ENCODE measurements at regions of chrX and their contacts with region 1.

Region 1: DNA sequence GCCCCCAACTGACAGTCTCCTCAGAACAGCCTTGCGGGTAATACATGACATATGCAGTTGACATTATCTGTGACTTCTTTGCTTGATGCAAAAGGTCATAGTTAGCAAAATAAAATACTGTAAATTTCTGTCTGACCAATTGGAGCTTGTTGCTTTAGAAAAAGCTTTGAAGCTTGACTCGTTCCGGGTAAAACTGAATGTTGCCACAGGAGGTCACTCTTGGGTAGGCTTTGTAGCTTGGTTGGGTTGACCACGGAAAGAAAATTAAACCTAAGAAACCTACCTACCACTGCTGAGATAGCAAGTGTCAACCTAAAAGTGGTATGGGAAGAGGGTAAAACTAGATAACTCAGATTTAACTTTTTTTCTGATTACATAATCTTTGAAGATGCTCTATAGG is 23.2 kb downstream of the PRPS2 start:
- DNase-seq: peak; percentile 59
- ATAC-seq: peak; percentile 97
- H3K4me3 ChIP-seq: no peak overlapping the region
- H3K27ac ChIP-seq: no peak overlapping the region
- H3K4me1 ChIP-seq: no peaks in the 10 kb centered on the region
- H3K27me3 ChIP-seq: no peaks in the 10 kb centered on the region
- CTCF ChIP-seq: peak; percentile 66 to 86 (median 69)
- EP300 ChIP-seq: no peak
- POLR2A ChIP-seq: no peak
- RAD21 ChIP-seq: peak; percentile 98

Region 2: GRCh38 chrX:12278151-12278550 is 536.3 kb before region 1 on chrX:
- CTCF ChIA-PET with region 1: no interaction called
- POLR2A ChIA-PET with region 1: no interaction called
- RAD21 ChIA-PET with region 1: no interaction called
- SMC1A ChIA-PET with region 1: no interaction called
- in situ Hi-C with region 1: no loop called
- intact Hi-C with region 1: no loop called
- DNase-seq: no peak
- ATAC-seq: no peak
- H3K4me3 ChIP-seq: no peak overlapping the region
- H3K27ac ChIP-seq: no peak overlapping the region
- H3K4me1 ChIP-seq: no peaks in the 10 kb centered on the region
- H3K27me3 ChIP-seq: no peaks in the 10 kb centered on the region
- CTCF ChIP-seq: no peak
- EP300 ChIP-seq: no peak
- POLR2A ChIP-seq: no peak
- RAD21 ChIP-seq: no peak

Region 3: GRCh38 chrX:12672367-12673106 is 141.9 kb before region 1 on chrX:
- CTCF ChIA-PET with region 1: no interaction called
- POLR2A ChIA-PET with region 1: no interaction called
- RAD21 ChIA-PET with region 1: no interaction called
- SMC1A ChIA-PET with region 1: no interaction called
- in situ Hi-C with region 1: no loop called
- intact Hi-C with region 1: no loop called
- DNase-seq: no peak
- ATAC-seq: no peak
- H3K4me3 ChIP-seq: no peak overlapping the region
- H3K27ac ChIP-seq: no peak overlapping the region
- H3K4me1 ChIP-seq: no peaks in the 10 kb centered on the region
- H3K27me3 ChIP-seq: no peaks in the 10 kb centered on the region; a peak in 1 of 4 replicates
- CTCF ChIP-seq: no peak
- EP300 ChIP-seq: no peak
- POLR2A ChIP-seq: no peak
- RAD21 ChIP-seq: no peak

Region 4: DNA sequence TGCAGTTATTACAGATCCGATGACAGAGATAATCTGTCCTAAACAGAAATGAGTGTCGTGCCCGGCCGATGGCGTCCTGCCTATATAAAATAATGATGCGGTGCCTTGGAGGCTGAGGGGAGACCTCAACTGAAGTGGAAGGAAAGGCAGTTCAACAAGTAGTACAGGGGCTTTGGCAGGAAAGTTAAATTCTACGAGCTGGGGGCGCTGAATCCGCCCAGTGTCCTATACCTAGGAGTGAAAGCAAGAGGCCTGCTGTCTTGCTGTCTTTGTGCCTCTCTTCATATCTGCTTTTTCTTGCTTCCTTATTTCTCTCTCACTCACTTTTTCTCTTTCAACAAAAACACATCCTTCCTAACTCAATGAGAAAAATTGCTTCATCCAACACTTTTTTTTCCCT is 105.4 kb before region 1 on chrX:
- CTCF ChIA-PET with region 1: no interaction called
- POLR2A ChIA-PET with region 1: no interaction called
- RAD21 ChIA-PET with region 1: no interaction called
- SMC1A ChIA-PET with region 1: no interaction called
- in situ Hi-C with region 1: no loop called
- intact Hi-C with region 1: no loop called
- DNase-seq: no peak
- ATAC-seq: no peak
- H3K4me3 ChIP-seq: no peak overlapping the region
- H3K27ac ChIP-seq: no peak overlapping the region
- H3K4me1 ChIP-seq: no peaks in the 10 kb centered on the region
- H3K27me3 ChIP-seq: peaks cover 0 to 1% of the 10 kb centered on the region in 2 experiments; a peak in 2 of 4 replicates
- CTCF ChIP-seq: no peak
- EP300 ChIP-seq: no peak
- POLR2A ChIP-seq: no peak
- RAD21 ChIP-seq: no peak

Region 5: GRCh38 chrX:12771445-12772069 is 42.9 kb before region 1 on chrX:
- CTCF ChIA-PET with region 1: interaction called, 31 read pairs
- POLR2A ChIA-PET with region 1: no interaction called
- RAD21 ChIA-PET with region 1: interaction called, 4 read pairs
- SMC1A ChIA-PET with region 1: interaction called, 5 read pairs
- in situ Hi-C with region 1: no loop called
- intact Hi-C with region 1: no loop called
- DNase-seq: peak; percentile 20
- ATAC-seq: peak; percentile 100
- H3K4me3 ChIP-seq: no peak overlapping the region
- H3K27ac ChIP-seq: no peak overlapping the region
- H3K4me1 ChIP-seq: no peaks in the 10 kb centered on the region
- H3K27me3 ChIP-seq: peaks cover 0 to 8% of the 10 kb centered on the region in 2 experiments; a peak in 2 of 4 replicates
- CTCF ChIP-seq: peak; percentile 94 to 97 (median 94)
- EP300 ChIP-seq: no peak
- POLR2A ChIP-seq: no peak
- RAD21 ChIP-seq: peak; percentile 46; the same call in 1 of the 2 replicates

Region 6: GRCh38 chrX:12825801-12826200 is 11.4 kb after region 1 on chrX:
- CTCF ChIA-PET with region 1: interaction called, 22 read pairs
- POLR2A ChIA-PET with region 1: interaction called, 3 read pairs
- RAD21 ChIA-PET with region 1: interaction called, 3 read pairs
- SMC1A ChIA-PET with region 1: interaction called, 16 read pairs
- in situ Hi-C with region 1: no loop called
- intact Hi-C with region 1: no loop called
- DNase-seq: no peak
- ATAC-seq: no peak
- H3K4me3 ChIP-seq: no peak overlapping the region
- H3K27ac ChIP-seq: no peak overlapping the region
- H3K4me1 ChIP-seq: no peaks in the 10 kb centered on the region
- H3K27me3 ChIP-seq: no peaks in the 10 kb centered on the region
- CTCF ChIP-seq: no peak
- EP300 ChIP-seq: no peak
- POLR2A ChIP-seq: no peak
- RAD21 ChIP-seq: no peak

Region 7: DNA sequence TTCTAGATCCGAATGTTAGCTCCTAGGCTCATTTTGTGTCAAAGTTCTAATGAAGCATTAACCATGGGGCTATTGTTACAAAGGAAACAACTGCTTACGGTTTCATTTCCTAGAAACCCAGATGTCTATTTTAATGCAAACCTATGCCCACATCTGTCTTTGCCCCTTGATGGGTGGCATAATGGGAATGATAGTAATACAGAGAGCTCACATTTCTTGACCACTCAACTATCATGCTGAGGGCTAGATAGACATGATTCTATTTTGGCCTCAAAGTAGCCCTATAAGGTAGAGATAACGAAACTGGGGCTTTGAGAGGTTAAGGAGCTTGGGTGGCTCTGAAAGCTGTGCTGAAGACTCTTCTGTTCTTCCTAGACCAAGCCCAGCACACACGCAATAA is 54.3 kb after region 1 on chrX:
- CTCF ChIA-PET with region 1: interaction called, 22 read pairs
- POLR2A ChIA-PET with region 1: no interaction called
- RAD21 ChIA-PET with region 1: interaction called, 9 read pairs
- SMC1A ChIA-PET with region 1: interaction called, 51 read pairs
- in situ Hi-C with region 1: no loop called
- intact Hi-C with region 1: loop called (anchors 2 kb)
- DNase-seq: peak; percentile 78
- ATAC-seq: peak; percentile 73
- H3K4me3 ChIP-seq: peak overlapping the region; percentile 63
- H3K27ac ChIP-seq: peak overlapping the region; percentile 97
- H3K4me1 ChIP-seq: peaks cover 28% of the 10 kb centered on the region
- H3K27me3 ChIP-seq: no peaks in the 10 kb centered on the region
- CTCF ChIP-seq: no peak
- EP300 ChIP-seq: peak in 1 of 2 experiments; percentile 48; a peak in 1 of 4 replicates
- POLR2A ChIP-seq: no peak; the same call in 1 of the 2 replicates
- RAD21 ChIP-seq: no peak

Region 8: DNA sequence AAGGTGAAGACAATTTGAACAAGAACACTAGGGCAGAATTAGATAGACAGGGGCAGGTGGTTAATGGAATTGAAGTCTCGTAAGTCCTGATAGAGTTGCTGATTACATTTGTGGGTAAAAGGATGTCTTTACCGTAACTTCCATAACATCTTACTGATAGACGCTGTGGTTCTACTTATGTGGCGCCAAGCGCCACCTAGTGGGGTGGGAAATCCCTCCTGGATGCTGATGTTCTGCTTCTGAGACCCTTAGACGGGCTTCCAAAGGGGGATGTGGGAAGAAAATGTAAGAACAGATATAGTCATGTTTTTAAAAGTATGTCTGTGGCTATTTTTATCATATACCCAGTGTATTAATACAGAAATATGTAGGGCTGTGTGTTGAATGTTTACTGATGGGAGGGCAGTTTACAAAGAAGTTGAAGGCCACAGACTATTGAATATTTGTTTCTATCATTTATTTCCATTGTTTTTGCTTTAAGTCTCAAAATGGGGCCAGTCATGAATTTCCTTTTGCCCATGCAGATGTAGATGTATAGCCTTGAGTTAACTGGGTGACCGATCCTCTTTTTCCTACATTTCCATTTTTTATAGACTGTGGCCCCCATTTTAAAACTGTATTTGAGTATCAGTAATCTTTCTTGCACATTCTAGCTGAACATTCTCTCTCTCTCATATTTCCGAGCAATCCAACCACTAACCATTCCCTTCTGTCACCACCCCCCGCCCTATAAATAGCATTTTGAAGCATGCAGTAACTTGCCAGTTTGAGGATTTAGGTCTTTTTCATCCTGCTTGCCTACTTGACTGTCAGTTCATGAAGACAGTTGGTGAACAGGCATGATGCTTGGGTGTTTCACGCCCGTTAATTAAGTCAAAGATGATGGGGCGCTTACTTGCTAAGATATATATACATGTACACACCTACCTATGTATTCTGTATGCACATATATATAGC is 79.9 kb after region 1 on chrX:
- CTCF ChIA-PET with region 1: interaction called, 431 read pairs
- POLR2A ChIA-PET with region 1: interaction called, 8 read pairs
- RAD21 ChIA-PET with region 1: interaction called, 277 read pairs
- SMC1A ChIA-PET with region 1: interaction called, 349 read pairs
- in situ Hi-C with region 1: no loop called
- intact Hi-C with region 1: loop called (anchors 1 kb)
- DNase-seq: no peak
- ATAC-seq: peak; percentile 61
- H3K4me3 ChIP-seq: no peak overlapping the region
- H3K27ac ChIP-seq: no peak overlapping the region
- H3K4me1 ChIP-seq: peaks cover 43% of the 10 kb centered on the region
- H3K27me3 ChIP-seq: no peaks in the 10 kb centered on the region
- CTCF ChIP-seq: peak; percentile 84 to 88 (median 84)
- EP300 ChIP-seq: no peak
- POLR2A ChIP-seq: no peak
- RAD21 ChIP-seq: peak; percentile 96

Region 9: DNA sequence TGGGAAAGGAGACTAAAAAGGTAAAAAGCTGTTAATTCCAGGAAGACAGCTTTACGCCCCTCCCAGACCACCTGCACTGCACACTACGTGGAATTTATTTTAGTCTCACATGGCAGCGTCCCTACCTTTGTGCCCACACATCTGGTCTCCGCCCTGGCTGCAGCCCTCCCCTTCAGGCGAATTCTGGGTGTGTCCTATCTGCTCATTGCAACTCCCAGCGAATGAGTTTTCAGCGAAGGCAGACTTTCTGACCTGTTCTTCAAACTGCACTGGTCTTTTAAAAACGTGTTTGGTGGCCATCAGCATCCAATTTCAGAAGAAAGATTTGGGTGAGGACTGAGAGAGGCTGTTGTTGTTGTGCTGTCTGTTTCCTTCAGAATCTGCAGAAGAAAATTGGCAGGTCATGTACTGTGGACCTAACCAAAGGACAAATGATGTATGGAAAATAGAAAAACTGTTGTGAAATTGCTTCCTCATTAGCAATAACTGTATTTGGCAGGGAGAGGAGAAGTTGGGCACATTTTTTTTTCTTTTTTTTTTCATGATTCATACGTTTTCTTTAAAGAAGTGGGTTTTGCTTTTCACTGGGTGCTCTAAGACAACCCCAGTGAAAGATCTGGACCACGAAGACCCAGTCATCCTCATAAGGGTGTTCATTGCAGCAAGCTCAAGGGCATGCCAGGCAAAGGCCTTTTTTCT is 96.2 kb after region 1 on chrX:
- CTCF ChIA-PET with region 1: interaction called, 16 read pairs
- POLR2A ChIA-PET with region 1: no interaction called
- RAD21 ChIA-PET with region 1: interaction called, 19 read pairs
- SMC1A ChIA-PET with region 1: interaction called, 7 read pairs
- in situ Hi-C with region 1: no loop called
- intact Hi-C with region 1: no loop called
- DNase-seq: no peak
- ATAC-seq: no peak
- H3K4me3 ChIP-seq: no peak overlapping the region
- H3K27ac ChIP-seq: no peak overlapping the region
- H3K4me1 ChIP-seq: no peaks in the 10 kb centered on the region
- H3K27me3 ChIP-seq: no peaks in the 10 kb centered on the region
- CTCF ChIP-seq: no peak
- EP300 ChIP-seq: no peak
- POLR2A ChIP-seq: no peak
- RAD21 ChIP-seq: no peak